Activated CD4-positive, alpha-beta T cell treated with anti-CD3 and anti-CD28 coated beads for 36 hours (primary cell): ENCODE measurements at regions of chr6 and their contacts with region 1.

Region 1: DNA sequence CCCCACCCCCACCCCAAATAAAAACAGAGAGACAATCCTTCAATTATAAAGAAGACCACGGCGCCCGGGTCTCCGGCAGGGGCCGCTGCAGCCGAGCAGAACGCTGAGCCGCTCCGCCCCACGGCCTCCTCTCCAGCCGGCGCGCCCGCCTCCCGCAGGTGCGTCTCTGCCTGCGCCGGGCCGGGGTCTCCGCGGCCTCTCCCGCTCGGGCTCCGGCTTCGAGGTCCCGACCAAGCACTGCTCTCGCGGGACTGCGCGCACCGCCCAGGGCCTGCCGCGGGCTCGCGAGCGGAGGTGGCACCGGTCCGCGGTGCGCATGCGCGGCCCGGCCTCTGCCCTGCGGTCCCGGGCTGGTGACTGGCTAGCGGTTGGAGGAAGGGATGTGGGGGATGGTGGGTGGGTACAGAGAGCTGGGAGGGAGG is 241 bp upstream of the SIRT5 start:
- DNase-seq: peak; percentile 95
- ATAC-seq: peak; percentile 80
- H3K4me3 Mint-ChIP-seq: peak overlapping the region; percentile 94
- H3K27ac Mint-ChIP-seq: peak overlapping the region; percentile 100
- H3K4me1 Mint-ChIP-seq: peaks cover 22% of the 10 kb centered on the region
- H3K27me3 Mint-ChIP-seq: no peaks in the 10 kb centered on the region

Region 2: GRCh38 chr6:12011276-12012076 is 1562.7 kb before region 1 on chr6:
- CTCF ChIA-PET with region 1: no interaction called
- POLR2A ChIA-PET with region 1: no interaction called
- intact Hi-C with region 1: loop called in 1 of 2 experiments (anchors 10 kb)
- DNase-seq: peak; percentile 99
- ATAC-seq: peak; percentile 77
- H3K4me3 Mint-ChIP-seq: peak overlapping the region; percentile 96
- H3K27ac Mint-ChIP-seq: peak overlapping the region; percentile 98
- H3K4me1 Mint-ChIP-seq: peaks cover 39% of the 10 kb centered on the region
- H3K27me3 Mint-ChIP-seq: no peaks in the 10 kb centered on the region

Region 3: DNA sequence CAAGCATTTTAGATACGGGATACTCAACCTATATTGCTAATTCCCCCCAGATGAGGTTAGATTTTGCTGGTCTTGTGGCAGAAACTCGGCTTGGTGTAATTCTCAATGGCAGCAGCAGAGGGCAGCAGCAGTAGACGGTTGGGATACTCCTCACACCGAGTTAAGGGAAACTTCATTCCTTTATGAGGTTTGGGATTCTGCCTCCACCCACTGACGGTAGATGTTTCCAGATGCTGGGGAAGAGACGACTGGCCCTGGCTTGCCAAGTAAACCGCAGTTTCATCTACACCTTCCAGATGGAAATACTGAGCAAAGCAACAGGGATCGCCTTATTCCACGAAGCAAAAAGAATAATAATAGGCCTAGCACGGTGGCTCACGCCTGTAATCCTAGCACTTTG is 237.6 kb before region 1 on chr6:
- CTCF ChIA-PET with region 1: interaction called, 22 read pairs
- POLR2A ChIA-PET with region 1: no interaction called
- intact Hi-C with region 1: loop called (anchors 1 kb)
- DNase-seq: peak; percentile 87
- ATAC-seq: peak; percentile 69
- H3K4me3 Mint-ChIP-seq: no peak overlapping the region
- H3K27ac Mint-ChIP-seq: no peak overlapping the region
- H3K4me1 Mint-ChIP-seq: peaks cover 10% of the 10 kb centered on the region
- H3K27me3 Mint-ChIP-seq: no peaks in the 10 kb centered on the region

Region 4: GRCh38 chr6:13454286-13455221 is 119.6 kb before region 1 on chr6:
- CTCF ChIA-PET with region 1: interaction called, 8 read pairs
- POLR2A ChIA-PET with region 1: interaction called, 4 read pairs
- intact Hi-C with region 1: loop called (anchors 1 to 2 kb)
- DNase-seq: peak; percentile 88
- ATAC-seq: peak; percentile 66
- H3K4me3 Mint-ChIP-seq: peak overlapping the region; percentile 36
- H3K27ac Mint-ChIP-seq: peak overlapping the region; percentile 95
- H3K4me1 Mint-ChIP-seq: peaks cover 63% of the 10 kb centered on the region
- H3K27me3 Mint-ChIP-seq: no peaks in the 10 kb centered on the region

Region 5: DNA sequence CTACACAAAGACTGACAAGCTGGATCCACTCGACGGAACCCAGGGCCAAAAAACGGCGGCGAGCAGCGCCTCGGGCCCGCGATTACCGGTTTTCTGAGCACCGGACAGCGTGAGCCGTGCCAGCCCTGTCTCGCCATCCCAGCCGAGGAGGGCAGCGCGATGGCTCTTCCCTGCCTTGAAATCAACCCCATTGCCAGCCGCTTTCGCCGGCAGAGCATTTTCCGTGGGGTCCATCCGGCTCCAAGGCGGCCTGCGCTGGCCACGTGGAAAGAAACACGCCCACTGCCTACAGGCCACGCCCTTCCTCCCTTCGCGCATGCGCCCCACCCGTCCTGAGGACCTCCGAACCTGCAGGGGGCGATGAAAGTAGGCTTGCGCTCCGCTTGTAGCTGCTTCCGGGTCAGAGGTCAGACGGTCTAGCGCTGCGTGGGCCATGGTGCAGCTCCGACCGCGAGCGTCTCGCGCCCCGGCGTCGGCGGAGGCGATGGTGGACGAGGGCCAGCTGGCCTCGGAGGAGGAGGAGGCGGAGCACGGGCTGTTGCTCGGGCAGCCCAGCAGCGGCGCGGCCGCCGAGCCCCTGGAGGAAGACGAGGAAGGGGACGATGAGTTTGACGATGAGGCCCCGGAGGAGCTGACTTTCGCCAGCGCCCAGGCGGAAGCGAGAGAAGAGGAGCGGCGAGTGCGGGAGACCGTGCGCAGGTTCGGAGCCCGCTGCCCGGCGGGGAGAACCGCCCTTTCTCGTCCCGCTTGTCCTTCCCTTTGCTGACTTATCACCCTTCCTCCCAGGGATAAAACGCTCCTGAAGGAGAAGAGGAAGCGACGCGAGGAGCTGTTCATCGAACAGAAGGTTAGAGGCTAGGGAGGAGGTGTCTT is 41.0 kb after region 1 on chr6 and contains the start of gene NOL7:
- CTCF ChIA-PET with region 1: interaction called, 32 read pairs
- POLR2A ChIA-PET with region 1: interaction called, 10 read pairs
- intact Hi-C with region 1: loop called (anchors 1 kb)
- DNase-seq: peak; percentile 99
- ATAC-seq: peak; percentile 92
- H3K4me3 Mint-ChIP-seq: peak within 1 kb of the TSS; percentile 92
- H3K27ac Mint-ChIP-seq: peak within 1 kb of the TSS; percentile 90
- H3K4me1 Mint-ChIP-seq: peaks cover 44% of the 10 kb centered on the region
- H3K27me3 Mint-ChIP-seq: no peaks in the 10 kb centered on the region
- total RNA-seq, gene NOL7: 92.8 to 97.3 TPM

Region 6: DNA sequence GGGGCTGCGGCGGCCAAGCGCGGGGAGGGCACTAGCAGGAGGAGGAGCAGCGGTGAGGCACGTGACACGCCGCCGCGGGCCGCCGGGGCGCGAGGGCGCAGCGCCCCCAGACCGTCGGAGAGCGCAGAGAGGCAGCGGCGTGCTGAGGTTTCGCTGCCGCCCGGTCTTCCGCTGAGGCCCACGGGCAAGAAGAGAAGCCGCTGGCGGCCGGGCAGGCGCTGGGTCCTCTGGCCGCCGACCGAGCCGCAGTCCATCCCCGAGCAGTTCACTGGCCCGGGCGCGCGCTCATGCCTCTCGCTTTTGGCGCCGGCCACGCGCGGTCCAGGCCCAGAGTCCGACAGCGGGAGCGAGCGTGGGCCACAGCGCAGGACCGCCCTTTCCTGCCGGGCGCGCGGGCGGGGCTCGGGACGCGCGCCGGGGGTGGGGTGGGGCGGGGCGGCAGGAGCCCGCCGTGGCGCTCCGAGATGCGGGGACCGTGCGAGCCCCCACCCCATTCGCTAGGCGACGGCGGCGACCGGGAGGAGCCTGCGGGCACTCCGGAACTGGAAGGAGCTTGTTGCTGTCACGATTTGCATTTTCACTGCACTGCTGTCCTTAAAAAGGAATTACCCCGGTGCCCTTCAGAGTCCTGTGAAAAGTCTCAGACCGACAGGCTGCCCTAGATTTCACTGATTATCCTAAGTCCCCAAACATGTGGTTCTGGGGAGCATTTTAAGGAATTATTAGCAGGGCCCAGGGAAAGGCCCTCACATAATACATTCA is 240.2 kb after region 1 on chr6 and contains the start of gene MCUR1:
- CTCF ChIA-PET with region 1: interaction called, 3 read pairs
- POLR2A ChIA-PET with region 1: interaction called, 4 read pairs
- intact Hi-C with region 1: loop called (anchors 1 kb)
- DNase-seq: peak; percentile 92
- ATAC-seq: peak; percentile 87
- H3K4me3 Mint-ChIP-seq: peak within 1 kb of the TSS; percentile 85
- H3K27ac Mint-ChIP-seq: peak within 1 kb of the TSS; percentile 87
- H3K4me1 Mint-ChIP-seq: peaks cover 27% of the 10 kb centered on the region
- H3K27me3 Mint-ChIP-seq: no peaks in the 10 kb centered on the region
- total RNA-seq, gene MCUR1: 37.9 to 59.3 TPM

Region 7: GRCh38 chr6:14569394-14569793 is 995.2 kb after region 1 on chr6:
- CTCF ChIA-PET with region 1: no interaction called
- POLR2A ChIA-PET with region 1: no interaction called
- intact Hi-C with region 1: no loop called
- DNase-seq: no peak
- ATAC-seq: no peak
- H3K4me3 Mint-ChIP-seq: no peak overlapping the region
- H3K27ac Mint-ChIP-seq: no peak overlapping the region
- H3K4me1 Mint-ChIP-seq: peaks cover 5% of the 10 kb centered on the region
- H3K27me3 Mint-ChIP-seq: no peaks in the 10 kb centered on the region